Cardiac septum (tissue), 1 donor: ENCODE measurements at regions of chr5 and their contacts with region 1.

Region 1: DNA sequence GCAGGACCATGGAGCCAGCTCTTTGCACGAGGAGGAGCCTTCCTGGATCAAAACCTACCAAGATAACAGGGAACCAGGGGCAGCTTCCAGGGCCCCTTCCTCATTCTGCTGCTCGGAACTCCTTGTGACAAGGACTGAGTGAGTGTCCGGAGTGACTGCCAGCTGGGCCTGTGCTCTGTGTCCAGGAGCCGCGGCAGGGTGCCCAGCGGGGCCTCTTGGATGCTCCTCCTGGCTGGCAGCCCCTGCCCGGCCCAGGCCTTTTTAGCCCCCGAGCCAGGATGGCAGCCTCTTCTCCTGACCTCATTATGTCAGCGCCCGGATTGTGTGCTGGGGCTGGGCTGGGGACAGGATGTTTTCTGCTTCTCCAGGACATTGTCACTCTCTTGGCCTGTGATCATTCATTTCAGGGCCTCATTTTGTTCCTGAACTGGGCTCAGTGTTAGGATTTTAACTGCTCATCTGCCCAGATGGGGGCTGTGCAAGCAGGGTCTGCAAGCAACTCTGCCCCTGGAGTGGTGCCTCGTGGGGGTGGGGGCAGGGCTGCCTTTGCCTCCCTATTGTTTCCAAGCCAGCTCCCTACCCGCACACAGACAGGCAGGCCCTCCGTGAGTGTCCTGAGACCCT is 161.7 kb downstream of the COL23A1 start:
- DNase-seq: peak; percentile 85

Region 2: DNA sequence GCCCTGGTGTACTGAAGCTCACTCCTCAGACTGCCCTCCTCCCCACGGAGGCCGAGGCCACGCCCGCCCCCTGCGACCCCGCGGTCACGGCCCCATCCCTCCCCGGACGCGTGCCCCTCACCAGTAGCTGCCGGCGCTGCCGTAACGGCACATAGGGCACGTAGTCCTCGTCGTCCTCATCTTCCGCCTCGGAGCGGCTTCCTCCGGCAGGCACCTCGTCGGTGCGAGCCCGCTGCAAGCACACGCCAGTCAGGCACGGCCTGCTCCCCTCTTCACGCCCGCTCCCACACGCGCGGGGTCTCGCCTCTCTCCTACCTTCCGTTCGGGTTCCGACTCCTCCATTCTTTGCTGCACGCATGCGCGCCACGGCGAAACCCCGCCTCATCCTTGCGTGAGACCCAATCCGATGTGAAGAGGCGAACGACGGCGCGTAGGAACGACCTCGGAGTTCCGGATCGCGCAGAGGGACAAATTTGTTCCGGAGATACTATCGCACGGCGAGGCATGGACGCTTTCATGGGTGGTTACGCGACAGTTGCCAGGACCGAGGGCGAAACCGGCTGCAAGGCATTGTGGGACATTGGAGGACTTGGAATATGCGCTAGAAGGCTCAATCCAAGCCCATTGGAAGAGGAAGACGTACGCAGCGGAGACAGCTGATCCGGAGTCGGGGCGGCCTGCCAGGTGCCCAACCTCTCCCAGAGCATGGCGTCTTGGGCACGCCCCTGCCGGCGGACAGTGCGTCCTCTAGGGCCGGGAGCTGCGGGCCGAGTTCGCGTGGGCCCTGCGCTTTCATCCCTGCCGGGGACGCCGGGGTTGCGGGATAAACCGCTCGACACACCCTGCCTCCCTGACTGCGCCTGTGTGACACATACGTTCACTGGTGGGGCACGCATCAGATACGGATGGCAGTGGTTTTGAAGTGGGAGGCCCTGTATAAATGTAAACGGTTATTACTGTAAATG is 911.6 kb before region 1 on chr5 and contains the start of gene DDX41:
- intact Hi-C with region 1: no loop called
- DNase-seq: peak; percentile 98
- total RNA-seq, gene DDX41: 37.9 TPM

Region 3: GRCh38 chr5:177576169-177576568 is 852.3 kb before region 1 on chr5:
- intact Hi-C with region 1: no loop called
- DNase-seq: no peak

Region 4: DNA sequence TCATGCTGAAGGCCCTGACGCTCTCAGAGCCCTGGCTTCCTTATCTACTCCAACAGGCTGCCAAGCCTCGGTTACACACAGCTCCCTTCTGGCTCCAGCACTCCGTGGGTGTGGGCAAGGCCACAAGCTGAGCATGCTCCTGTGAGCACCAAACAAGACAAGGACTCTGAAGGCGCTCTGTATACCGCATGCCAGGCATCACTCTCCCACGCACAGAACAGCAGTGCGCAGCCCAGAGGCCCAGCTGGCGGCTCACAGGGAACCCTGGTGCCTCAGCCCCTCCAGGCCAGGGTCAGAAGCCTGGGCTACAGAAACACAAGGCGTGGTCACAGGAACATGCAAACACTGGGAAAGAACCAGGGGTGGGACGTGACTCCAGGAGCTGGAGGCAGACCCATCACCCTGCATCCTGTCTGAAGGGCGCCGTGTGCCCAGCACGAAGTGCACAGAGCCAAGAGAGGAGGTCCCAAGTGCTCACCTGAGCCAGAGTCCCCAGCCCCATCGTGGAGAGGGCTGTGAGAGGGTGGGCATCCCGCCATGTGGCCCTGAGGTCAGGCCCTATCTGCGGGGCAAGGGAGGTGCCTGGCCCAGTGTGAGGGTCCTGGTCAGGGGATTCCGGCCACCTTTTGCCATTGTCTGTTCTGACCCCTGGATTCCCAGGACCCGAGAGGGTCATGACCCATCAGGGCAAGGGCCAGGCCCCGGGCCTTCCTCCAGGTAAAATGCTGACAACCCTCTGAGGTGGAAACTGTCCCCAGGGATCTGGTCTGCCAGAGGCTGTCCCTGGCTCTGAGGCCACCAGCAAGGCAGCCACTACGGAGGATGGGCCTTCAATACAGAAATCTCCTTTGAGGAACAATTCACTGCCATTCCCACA is 107.1 kb after region 1 on chr5:
- intact Hi-C with region 1: loop called (anchors 5 kb)
- DNase-seq: peak; percentile 86

Region 5: GRCh38 chr5:178602752-178603151 is 174.3 kb after region 1 on chr5:
- intact Hi-C with region 1: no loop called
- DNase-seq: no peak